ENCODE measurements at regions of chr13 and their contacts with region 1.

Region 1: DNA sequence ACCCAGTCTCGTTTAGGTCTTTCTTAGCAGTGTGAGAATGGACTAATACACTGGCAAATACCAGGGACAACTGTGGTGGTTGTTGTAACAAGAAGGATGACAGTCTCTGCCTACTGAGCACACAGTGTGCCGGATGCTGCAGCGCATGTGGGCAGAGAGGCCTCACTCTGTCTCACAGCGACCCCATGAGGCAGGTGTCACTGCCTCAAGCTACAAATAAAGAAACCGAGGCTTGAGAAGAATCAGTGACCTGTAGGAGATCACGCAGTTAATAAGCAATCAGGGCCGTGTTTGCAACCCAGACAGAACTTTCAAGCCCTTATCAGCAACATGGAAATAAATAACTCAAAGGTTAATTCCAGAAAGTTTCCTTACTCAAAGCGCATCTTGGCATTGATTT is 40.5 kb upstream of the GAS6 start:
- DNase-seq: peak; percentile 25
- ATAC-seq: peak; percentile 92
- H3K4me3 ChIP-seq: no peak overlapping the region
- H3K27ac ChIP-seq: no peak overlapping the region
- H3K4me1 ChIP-seq: no peaks in the 10 kb centered on the region
- H3K27me3 ChIP-seq: peaks cover 4 to 41% of the 10 kb centered on the region in 2 experiments
- CTCF ChIP-seq: peak; percentile 87
- EP300 ChIP-seq: no peak
- POLR2A ChIP-seq: no peak
- RAD21 ChIP-seq: peak; percentile 80

Region 2: DNA sequence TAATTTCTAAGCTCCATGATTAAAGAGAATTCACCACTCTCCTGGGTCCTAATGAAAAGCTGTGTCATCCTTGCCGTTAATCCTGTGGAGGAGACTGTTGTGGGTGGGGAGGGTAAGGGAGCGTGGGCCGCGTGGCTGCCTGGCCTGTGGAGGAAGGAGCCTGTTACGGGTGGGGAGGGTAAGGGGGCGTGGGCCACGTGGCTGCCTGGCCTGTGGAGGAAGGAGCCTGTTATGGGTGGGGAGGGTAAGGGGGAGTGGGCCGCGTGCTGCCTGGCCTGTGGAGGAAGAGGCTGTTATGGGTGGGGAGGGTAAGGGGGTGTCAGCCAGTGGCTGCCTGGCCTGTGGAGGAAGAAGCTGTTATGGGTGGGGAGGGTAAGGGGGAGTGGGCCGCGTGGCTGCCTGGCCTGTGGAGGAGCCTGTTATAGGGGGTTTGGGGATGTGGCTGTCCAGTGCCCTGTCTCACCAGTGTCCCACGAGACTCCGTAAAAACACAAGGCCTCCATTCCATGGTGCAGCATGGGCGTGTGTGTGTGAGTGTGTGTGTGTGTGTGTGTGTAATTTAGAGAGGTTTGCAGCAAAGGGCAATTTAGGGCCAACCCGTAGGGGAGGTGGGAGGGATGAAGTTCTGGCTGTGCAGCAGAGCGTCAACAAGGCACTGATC is 398.3 kb before region 1 on chr13:
- CTCF ChIA-PET with region 1: no interaction called
- POLR2A ChIA-PET with region 1: no interaction called
- in situ Hi-C with region 1: no loop called
- intact Hi-C with region 1: no loop called
- DNase-seq: no peak
- ATAC-seq: no peak
- H3K4me3 ChIP-seq: no peak overlapping the region
- H3K27ac ChIP-seq: no peak overlapping the region
- H3K4me1 ChIP-seq: no peaks in the 10 kb centered on the region
- H3K27me3 ChIP-seq: no peaks in the 10 kb centered on the region
- CTCF ChIP-seq: no peak
- EP300 ChIP-seq: no peak
- POLR2A ChIP-seq: no peak
- RAD21 ChIP-seq: no peak

Region 3: DNA sequence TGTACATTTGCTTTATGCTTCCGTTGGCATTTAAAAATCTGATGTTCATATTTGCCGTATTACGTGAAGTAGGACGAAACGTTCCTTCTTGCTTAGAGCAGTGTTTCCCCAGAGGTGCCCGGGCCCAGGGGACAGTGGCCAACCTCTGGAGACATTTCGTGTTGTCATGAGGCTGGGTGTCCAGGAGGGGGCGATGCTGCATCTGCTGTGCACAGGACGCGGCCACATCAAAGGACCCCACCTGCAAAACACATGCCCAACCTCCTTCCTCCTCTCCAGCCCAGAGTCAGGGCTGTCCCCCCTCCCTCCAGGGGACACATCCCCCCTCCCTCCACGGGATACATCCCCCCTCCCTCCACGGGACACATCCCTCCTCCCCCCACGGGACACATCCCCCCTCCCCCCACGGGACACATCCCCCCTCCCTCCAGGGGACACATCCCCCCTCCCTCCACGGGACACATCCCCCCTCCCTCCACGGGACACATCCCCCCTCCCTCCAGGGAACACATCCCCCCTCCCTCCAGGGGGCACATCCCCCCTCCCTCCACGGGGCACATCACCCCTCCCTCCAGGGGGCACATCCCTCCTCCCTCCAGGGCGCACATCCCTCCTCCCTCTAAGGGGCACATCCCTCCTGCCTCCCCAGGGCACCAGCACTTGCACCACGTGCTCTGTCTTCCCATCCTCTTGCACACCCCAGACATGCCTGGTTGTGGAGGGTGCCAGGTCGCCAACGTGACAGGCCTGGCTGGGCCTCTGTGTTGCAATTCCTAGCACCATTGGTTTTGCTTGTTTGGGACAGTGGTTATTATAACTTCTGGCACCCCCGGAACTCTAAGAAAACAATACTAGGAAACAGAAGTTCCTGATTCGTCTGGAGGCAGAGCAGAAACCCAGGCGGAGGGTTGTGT is 87.2 kb before region 1 on chr13:
- CTCF ChIA-PET with region 1: interaction called, 12 read pairs
- POLR2A ChIA-PET with region 1: no interaction called
- in situ Hi-C with region 1: loop called (anchors 5 kb)
- intact Hi-C with region 1: loop called (anchors 2 kb)
- DNase-seq: peak; percentile 76
- ATAC-seq: peak; percentile 61
- H3K4me3 ChIP-seq: no peak overlapping the region
- H3K27ac ChIP-seq: no peak overlapping the region
- H3K4me1 ChIP-seq: peaks cover 12% of the 10 kb centered on the region; the same call in 1 of the 2 replicates
- H3K27me3 ChIP-seq: peaks cover 9 to 19% of the 10 kb centered on the region in 2 experiments; a peak in 4 of 5 replicates
- CTCF ChIP-seq: peak; percentile 89
- EP300 ChIP-seq: no peak
- POLR2A ChIP-seq: no peak
- RAD21 ChIP-seq: peak; percentile 87

Region 4: GRCh38 chr13:113916330-113916815 is 12.0 kb after region 1 on chr13:
- CTCF ChIA-PET with region 1: no interaction called
- POLR2A ChIA-PET with region 1: no interaction called
- in situ Hi-C with region 1: no loop called
- intact Hi-C with region 1: no loop called
- DNase-seq: no peak
- ATAC-seq: no peak
- H3K4me3 ChIP-seq: no peak overlapping the region
- H3K27ac ChIP-seq: no peak overlapping the region
- H3K4me1 ChIP-seq: no peaks in the 10 kb centered on the region
- H3K27me3 ChIP-seq: peaks cover 2 to 28% of the 10 kb centered on the region in 2 experiments; a peak in 3 of 5 replicates
- CTCF ChIP-seq: no peak
- EP300 ChIP-seq: no peak
- POLR2A ChIP-seq: no peak
- RAD21 ChIP-seq: no peak